ENCODE measurements at regions of chr7 and their contacts with region 1.

Region 1: DNA sequence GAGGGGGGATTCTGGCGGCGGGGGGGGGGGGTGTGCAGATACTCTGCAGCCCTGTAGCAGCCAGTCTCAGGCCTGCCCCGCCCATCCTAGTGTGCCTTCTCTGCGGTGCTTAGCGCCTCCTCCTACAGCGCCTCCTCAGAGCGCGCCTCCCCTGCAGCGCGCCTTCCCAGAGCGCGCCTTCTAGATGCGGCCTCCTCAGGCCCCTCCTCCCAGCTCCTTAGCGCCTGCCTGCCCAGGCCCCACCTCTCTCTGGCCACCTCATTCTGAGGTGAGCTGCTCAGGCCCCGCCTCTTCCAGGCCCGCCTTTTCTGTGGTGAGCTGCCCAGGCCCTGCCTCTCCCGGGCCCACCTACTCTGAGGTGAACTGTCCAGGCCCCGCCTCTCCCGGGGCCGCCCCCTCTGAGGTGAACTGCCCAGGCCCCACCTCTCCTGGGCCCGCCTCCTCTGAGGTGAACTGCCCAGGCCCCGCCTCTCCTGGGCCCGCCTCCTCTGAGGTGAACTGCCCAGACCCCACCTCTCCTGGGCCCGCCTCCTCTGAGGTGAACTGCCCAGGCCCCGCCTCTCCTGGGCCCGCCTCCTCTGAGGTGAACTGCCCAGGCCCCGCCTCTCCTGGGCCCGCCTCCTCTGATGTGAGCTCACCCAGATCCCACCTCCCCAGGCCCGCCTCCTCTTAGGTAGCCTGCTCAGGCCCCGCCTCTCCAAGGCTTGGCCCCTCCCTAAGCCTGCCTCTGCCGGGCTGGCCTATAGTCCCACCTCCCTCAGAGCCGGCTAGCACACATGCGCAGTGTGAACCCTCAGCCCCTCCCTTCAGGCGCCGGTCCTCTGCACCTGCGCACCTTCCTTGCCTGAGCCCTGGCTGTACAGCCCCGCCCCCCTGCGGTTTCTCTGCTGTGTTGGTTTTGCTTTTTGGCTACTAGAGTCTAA is 2.1 kb upstream of the SGCE start:
- DNase-seq: peak; percentile 99
- ATAC-seq: peak; percentile 84
- H3K4me3 ChIP-seq: peak overlapping the region; percentile 96
- H3K27ac ChIP-seq: no peak overlapping the region
- H3K4me1 ChIP-seq: peaks cover 18% of the 10 kb centered on the region
- H3K27me3 ChIP-seq: no peaks in the 10 kb centered on the region
- CTCF ChIP-seq: no peak

Region 2: GRCh38 chr7:94301024-94301586 is 356.9 kb before region 1 on chr7:
- CTCF ChIA-PET with region 1: interaction called, 4 read pairs
- POLR2A ChIA-PET with region 1: interaction called, 10 read pairs
- intact Hi-C with region 1: loop called (anchors 5 kb)
- DNase-seq: peak; percentile 91
- ATAC-seq: peak; percentile 98
- H3K4me3 ChIP-seq: peak overlapping the region; percentile 46; the same call in 1 of the 2 replicates
- H3K27ac ChIP-seq: peak overlapping the region; percentile 95
- H3K4me1 ChIP-seq: peaks cover 49% of the 10 kb centered on the region
- H3K27me3 ChIP-seq: no peaks in the 10 kb centered on the region
- CTCF ChIP-seq: no peak

Region 3: DNA sequence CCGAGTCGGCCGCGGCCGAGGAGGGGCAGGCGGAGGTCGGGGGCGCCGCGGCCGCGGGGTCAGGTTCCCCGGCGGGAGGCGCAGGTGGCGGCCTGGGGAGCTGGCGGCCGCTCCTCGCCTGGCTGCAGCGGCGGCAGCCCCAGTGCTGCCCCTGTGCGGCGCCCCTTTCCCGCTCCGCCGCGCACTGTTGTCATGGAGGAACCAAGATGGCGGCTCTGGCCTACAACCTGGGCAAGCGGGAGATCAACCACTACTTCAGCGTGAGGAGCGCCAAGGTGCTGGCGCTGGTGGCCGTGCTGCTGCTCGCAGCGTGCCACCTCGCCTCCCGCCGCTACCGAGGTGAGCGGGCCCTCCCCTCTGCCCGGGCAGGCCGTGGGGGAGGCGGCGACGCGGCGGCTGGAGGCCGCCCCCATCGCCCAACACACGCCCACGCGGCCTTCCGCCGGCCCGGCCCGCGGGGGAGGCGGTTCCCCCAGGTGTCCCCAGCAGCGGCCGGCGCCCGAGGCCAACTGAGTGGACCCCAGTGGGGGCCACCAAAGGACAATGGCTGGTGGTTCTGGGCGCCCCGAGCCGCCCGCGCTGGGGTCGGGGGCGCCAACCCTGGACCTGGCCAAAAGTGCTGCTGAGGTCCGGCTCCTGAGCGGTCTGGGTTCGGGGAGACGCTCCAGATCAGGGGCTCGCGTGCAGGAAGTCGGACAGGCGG is 148.0 kb before region 1 on chr7:
- CTCF ChIA-PET with region 1: no interaction called
- POLR2A ChIA-PET with region 1: no interaction called
- intact Hi-C with region 1: loop called (anchors 2 kb)
- DNase-seq: peak; percentile 54
- ATAC-seq: peak; percentile 72
- H3K4me3 ChIP-seq: peak overlapping the region; percentile 88
- H3K27ac ChIP-seq: peak overlapping the region; percentile 80
- H3K4me1 ChIP-seq: peaks cover 32% of the 10 kb centered on the region
- H3K27me3 ChIP-seq: no peaks in the 10 kb centered on the region
- CTCF ChIP-seq: no peak

Region 4: GRCh38 chr7:94643771-94644540 is 14.1 kb before region 1 on chr7:
- CTCF ChIA-PET with region 1: no interaction called
- POLR2A ChIA-PET with region 1: no interaction called
- intact Hi-C with region 1: loop called (anchors 1 kb)
- DNase-seq: peak; percentile 82
- ATAC-seq: peak; percentile 82
- H3K4me3 ChIP-seq: peak overlapping the region; percentile 43
- H3K27ac ChIP-seq: peak overlapping the region; percentile 94
- H3K4me1 ChIP-seq: peaks cover 37% of the 10 kb centered on the region
- H3K27me3 ChIP-seq: no peaks in the 10 kb centered on the region
- CTCF ChIP-seq: no peak

Region 5: DNA sequence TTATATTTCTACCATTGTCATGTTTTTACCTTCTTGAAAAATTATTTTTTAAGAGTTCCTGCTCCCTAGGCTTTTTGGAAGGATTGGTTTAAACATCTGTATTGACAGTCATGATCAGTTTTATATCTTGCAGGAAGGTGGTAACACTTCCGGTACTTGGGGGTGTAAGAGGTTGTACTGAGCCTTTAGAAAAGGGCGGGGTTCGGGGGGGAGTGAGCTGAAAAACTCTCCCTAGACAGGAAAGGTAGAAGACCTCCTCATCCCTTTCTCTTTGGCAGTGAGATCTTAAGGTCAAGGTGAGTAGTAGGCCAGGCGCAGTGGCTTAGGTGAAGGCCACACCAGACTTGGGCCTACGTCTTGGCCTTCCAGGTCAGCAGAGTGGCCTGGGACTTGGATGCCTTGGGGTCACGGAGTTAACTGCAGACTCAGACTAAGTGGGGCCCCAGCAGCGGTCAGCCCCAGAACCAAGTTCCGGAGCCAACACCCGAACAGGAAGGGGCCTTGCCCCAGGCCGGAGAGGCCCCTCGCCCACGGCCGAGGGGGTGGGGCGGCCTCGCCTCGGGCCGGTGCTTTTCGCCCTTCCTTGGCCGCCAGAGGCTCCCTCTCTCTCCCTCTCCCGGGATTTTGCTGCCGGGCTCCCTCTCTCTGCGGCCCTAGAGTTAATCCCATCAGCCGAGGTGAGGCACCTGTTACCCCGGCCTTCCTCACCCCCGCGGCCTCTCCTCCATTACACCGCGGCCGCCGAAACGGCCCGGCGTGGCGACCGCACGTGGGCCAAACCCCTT is 249.2 kb after region 1 on chr7 and contains the start of gene PPP1R9A:
- CTCF ChIA-PET with region 1: interaction called, 4 read pairs
- POLR2A ChIA-PET with region 1: interaction called, 17 read pairs
- intact Hi-C with region 1: loop called (anchors 1 kb)
- DNase-seq: peak; percentile 65
- ATAC-seq: peak; percentile 80
- H3K4me3 ChIP-seq: peak within 1 kb of the TSS; percentile 95
- H3K27ac ChIP-seq: no peak within 1 kb of the TSS
- H3K4me1 ChIP-seq: peaks cover 10% of the 10 kb centered on the region
- H3K27me3 ChIP-seq: no peaks in the 10 kb centered on the region
- CTCF ChIP-seq: peak; percentile 53
- total RNA-seq, gene PPP1R9A: 5.9 and 9.5 TPM in 2 replicates

Region 6: DNA sequence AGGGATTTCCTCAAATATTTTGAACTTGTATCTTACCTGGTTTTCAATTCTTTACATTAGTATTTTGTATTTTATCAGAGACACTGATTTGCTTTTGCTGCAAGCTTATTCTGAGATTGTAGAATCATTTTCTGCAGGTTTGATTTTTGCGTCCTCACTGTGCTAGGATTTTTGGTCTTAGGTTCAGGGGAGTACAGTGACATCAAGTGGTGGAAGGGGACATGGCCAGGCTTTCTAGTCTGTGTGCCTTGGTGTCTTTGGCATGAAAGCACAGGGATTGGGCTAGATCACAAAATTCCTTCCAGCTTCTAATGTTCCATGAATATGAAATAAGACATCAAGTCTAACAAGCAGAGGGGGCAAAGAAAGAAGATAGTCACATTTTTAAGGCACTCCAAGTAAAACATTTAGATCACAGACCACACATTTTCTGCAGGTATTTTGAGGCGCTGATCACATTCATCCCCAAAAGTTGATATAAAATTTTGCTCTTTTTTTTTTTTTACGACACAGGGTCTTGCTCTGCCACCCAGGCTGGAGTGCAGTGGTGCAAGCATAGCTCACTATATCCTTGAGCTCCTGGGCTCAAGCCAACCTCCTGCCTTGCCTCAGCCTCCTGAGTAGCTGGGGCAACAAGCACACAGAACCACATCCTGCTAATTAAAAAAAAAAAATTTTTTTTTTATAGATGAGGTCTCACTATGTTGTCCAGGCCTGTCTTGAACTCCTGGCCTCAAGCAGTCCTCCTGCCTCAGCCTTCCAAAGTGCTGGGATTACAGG is 541.9 kb after region 1 on chr7:
- CTCF ChIA-PET with region 1: interaction called, 3 read pairs
- POLR2A ChIA-PET with region 1: no interaction called
- intact Hi-C with region 1: loop called (anchors 2 kb)
- DNase-seq: peak; percentile 60
- ATAC-seq: peak; percentile 87
- H3K4me3 ChIP-seq: no peak overlapping the region
- H3K27ac ChIP-seq: no peak overlapping the region
- H3K4me1 ChIP-seq: no peaks in the 10 kb centered on the region
- H3K27me3 ChIP-seq: no peaks in the 10 kb centered on the region
- CTCF ChIP-seq: peak; percentile 81